ENCODE measurements at regions of chr3 and their contacts with region 1.

Region 1: GRCh38 chr3:141272906-141273662 is 41.5 kb downstream of the PXYLP1 start:
- DNase-seq: no peak
- H3K4me3 ChIP-seq: no peak overlapping the region
- H3K27ac ChIP-seq: peak overlapping the region; percentile 100
- H3K4me1 ChIP-seq: peaks cover 68% of the 10 kb centered on the region
- H3K27me3 ChIP-seq: no peaks in the 10 kb centered on the region
- CTCF ChIP-seq: no peak

Region 2: GRCh38 chr3:139671863-139672646 is 1601.0 kb before region 1 on chr3:
- CTCF ChIA-PET with region 1: no interaction called
- POLR2A ChIA-PET with region 1: no interaction called
- intact Hi-C with region 1: no loop called
- DNase-seq: no peak
- H3K4me3 ChIP-seq: no peak overlapping the region
- H3K27ac ChIP-seq: no peak overlapping the region
- H3K4me1 ChIP-seq: 0 out of 2 replicates have a peak, but pooled peaks cover 4% of the 10 kb centered on the region
- H3K27me3 ChIP-seq: no peaks in the 10 kb centered on the region
- CTCF ChIP-seq: no peak

Region 3: GRCh38 chr3:141392897-141393734 is 120.0 kb after region 1 on chr3:
- CTCF ChIA-PET with region 1: no interaction called
- POLR2A ChIA-PET with region 1: no interaction called
- intact Hi-C with region 1: no loop called
- DNase-seq: peak; percentile 58 to 65
- H3K4me3 ChIP-seq: no peak overlapping the region
- H3K27ac ChIP-seq: no peak overlapping the region
- H3K4me1 ChIP-seq: peaks cover 13% of the 10 kb centered on the region
- H3K27me3 ChIP-seq: no peaks in the 10 kb centered on the region
- CTCF ChIP-seq: no peak

Region 4: DNA sequence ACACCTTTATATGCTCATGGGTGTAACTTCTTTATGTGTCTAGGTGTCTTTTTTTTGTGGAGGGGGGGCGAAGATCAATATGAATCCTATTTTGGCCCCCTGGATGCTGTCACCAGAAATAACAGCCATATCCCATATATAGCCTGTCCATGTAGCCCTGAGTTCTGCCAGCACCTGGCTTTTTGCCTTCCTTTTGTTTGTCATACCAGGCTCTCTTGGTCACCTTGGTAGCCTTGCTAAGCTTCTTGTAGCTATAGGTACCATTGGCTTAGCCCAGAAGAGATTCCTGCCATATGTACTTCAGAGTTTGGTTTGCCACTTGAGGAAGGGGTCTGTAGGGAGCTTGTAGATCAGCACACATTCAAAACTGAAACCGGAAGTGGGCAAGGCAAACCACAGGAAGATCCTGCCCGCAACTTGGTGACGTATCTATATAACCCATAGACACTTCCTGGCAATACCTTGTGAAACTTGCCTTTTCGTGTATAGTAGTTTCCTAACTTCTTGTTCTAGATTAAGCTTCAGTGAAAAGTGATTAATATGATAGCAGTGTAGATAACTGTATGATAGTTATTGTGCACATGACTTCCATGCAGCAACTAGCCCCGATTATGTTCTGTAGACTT is 225.6 kb after region 1 on chr3:
- CTCF ChIA-PET with region 1: no interaction called
- POLR2A ChIA-PET with region 1: interaction called, 36 read pairs
- intact Hi-C with region 1: no loop called
- DNase-seq: no peak
- H3K4me3 ChIP-seq: no peak overlapping the region
- H3K27ac ChIP-seq: no peak overlapping the region
- H3K4me1 ChIP-seq: no peaks in the 10 kb centered on the region
- H3K27me3 ChIP-seq: no peaks in the 10 kb centered on the region
- CTCF ChIP-seq: no peak

Measured in PC-9 (cell line).